Dendritic cell treated with granulocyte-macrophage colony-stimulating factor and Interleukin-4, amounts not matched to agents 40 ng/mL and 50 ng/mL, for 4 days (primary cell): ENCODE measurements at regions of chr3 and their contacts with region 1.

Region 1: GRCh38 chr3:132703733-132704132 is 18.5 kb downstream of the NPHP3 start:
- H3K4me3 Mint-ChIP-seq: no peak overlapping the region
- H3K27ac Mint-ChIP-seq: no peak overlapping the region
- H3K4me1 Mint-ChIP-seq: no peaks in the 10 kb centered on the region
- H3K27me3 Mint-ChIP-seq: no peaks in the 10 kb centered on the region

Region 2: DNA sequence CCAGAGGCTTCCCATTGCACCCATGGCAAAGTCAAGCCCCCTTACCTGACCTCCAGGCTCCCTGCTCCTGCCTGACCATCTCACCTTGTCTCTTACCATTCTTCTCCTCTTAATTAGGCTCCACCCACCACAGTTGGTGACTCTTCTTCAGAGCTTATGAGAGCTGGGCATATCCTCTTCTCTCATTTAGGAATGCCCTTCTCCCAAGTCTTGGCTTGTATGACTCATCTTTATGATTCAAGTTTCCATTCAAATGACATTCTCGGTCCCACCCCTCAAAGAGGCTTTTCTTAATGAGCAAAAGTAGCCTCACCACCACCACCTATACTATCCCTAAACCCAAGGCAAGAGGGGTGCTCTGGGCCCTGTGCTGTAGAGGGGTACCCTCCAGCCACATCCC is 1377.4 kb before region 1 on chr3:
- intact Hi-C with region 1: no loop called
- H3K4me3 Mint-ChIP-seq: no peak overlapping the region
- H3K27ac Mint-ChIP-seq: no peak overlapping the region
- H3K4me1 Mint-ChIP-seq: peaks cover 35% of the 10 kb centered on the region
- H3K27me3 Mint-ChIP-seq: no peaks in the 10 kb centered on the region

Region 3: DNA sequence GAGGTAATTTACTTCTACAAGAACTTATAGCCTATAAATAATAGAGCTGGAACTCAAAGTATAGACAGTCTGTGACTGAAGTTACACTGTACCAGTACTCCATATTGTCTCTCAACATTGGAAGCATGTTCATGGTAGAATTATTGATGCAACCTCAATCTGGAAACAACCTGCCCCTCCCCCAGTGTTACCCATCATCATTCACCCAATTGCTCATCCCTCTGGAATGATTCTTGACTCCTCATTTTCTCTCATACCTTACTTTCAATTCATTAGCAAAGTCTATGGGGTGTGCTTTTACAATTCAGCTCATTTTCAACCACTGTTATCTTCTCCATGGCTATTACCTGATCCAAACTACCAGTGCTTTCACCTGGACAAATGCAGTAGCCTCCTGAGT is 820.6 kb before region 1 on chr3:
- intact Hi-C with region 1: no loop called
- H3K4me3 Mint-ChIP-seq: no peak overlapping the region
- H3K27ac Mint-ChIP-seq: no peak overlapping the region
- H3K4me1 Mint-ChIP-seq: no peaks in the 10 kb centered on the region
- H3K27me3 Mint-ChIP-seq: peaks cover 2% of the 10 kb centered on the region

Region 4: DNA sequence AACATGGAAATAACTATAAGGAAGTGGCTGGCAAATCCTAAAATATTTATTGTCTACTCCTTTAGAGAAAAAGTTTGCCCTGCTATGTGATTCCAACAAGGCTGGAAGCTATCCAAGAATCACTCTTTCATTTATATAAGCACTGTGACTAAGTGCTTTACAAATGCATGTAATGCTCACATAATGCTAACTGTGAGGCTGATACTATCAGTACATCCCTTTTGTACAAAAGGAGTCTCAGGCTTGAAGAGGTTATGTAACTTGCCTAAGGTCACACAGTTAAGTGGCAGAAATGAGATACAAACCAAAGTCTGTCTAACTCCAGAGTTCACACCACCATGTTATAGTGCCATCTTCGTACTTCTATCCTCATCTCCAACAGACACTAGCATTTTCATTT is 941.0 kb after region 1 on chr3:
- intact Hi-C with region 1: loop called (anchors 5 kb)
- H3K4me3 Mint-ChIP-seq: no peak overlapping the region
- H3K27ac Mint-ChIP-seq: no peak overlapping the region
- H3K4me1 Mint-ChIP-seq: no peaks in the 10 kb centered on the region
- H3K27me3 Mint-ChIP-seq: no peaks in the 10 kb centered on the region